HEK293T (cell line): ENCODE measurements at regions of chr6 and their contacts with region 1.

Region 1: DNA sequence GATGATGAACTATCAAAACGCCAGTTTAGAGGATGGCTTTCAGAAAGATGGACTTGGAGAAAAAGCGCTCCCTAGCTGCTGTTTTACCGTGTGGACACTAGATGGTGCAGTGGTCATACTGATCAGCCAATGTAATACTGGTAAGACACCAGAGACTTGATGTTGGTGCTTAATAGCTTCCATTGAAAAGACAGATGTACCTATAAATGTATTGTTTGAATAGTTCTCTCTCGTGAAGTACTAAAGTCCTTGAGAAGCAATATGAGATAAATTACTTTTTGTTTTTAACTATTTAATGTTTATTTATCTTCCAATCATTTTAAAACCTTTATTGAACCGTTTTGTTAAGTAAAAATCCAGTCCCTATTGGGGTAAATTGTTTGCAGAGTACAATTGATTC is 63.9 kb upstream of the FUCA2 start:
- DNase-seq: peak; percentile 84

Region 2: GRCh38 chr6:143940011-143940597 is 364.7 kb after region 1 on chr6:
- CTCF ChIA-PET with region 1: interaction called, 18 read pairs
- POLR2A ChIA-PET with region 1: no interaction called
- DNase-seq: peak; percentile 78

Region 3: GRCh38 chr6:144013486-144013909 is 438.1 kb after region 1 on chr6:
- CTCF ChIA-PET with region 1: interaction called, 13 read pairs
- POLR2A ChIA-PET with region 1: interaction called, 4 read pairs
- DNase-seq: peak; percentile 82

Region 4: GRCh38 chr6:145199961-145200360 is 1624.5 kb after region 1 on chr6:
- CTCF ChIA-PET with region 1: interaction called, 11 read pairs
- POLR2A ChIA-PET with region 1: no interaction called
- DNase-seq: no peak